Esophagus squamous epithelium (tissue), 5 donors: ENCODE measurements at regions of chr1 and their contacts with region 1.

Region 1: GRCh38 chr1:155504207-155504606 is 58.4 kb downstream of the ASH1L start:
- DNase-seq: no peak
- H3K4me3 ChIP-seq: no peak overlapping the region
- H3K27ac ChIP-seq: no peak overlapping the region
- H3K4me1 ChIP-seq: peaks cover 6 to 51% (median 10%) of the 10 kb centered on the region in 3 donors
- H3K27me3 ChIP-seq: no peaks in the 10 kb centered on the region
- CTCF ChIP-seq: peak in 4 of 6 experiments; percentile 15 to 44 (median 23)
- POLR2A ChIP-seq: no peak

Region 2: DNA sequence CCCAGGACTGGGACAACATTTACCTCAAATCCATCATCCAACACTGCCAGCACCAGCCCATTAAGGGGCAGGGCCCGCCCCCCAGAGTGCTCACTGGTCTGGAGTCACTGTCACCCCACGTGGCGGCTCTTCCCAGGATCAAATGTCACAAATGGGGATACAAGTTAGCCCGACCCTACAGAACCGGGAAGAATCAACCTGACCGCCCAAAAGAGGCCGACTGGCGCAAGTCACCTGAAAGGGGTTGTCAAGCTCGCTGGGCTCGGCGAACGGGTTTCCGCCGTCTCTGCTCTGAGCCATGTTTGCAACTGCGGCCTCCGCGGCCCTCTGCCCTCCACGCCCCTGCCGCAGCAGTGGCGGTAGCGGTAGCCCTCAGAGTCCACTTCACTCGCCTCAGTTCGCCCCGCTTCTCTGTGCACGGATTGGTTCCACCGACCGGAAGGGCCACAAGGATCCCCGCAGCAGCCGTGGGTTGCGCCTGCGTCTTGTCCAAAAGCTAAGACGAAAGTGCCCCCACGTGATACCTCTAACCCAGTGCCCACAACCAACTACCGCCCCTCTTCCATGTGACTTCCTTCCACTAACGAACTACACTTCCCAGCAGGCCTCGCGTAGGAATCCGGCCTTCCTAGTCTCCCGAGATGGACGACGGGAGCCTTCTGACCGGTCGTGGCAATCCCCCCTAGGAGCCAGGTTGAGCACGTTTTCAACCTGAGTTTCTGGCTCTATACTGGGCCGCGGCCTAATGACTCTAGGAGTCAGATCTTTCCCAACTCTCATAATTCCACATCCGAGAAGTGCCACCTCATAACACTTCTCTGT is 242.1 kb before region 1 on chr1 and contains the start of gene SCAMP3:
- intact Hi-C with region 1: loop called (anchors 10 kb)
- DNase-seq: peak; percentile 77
- H3K4me3 ChIP-seq: peak within 1 kb of the TSS; percentile 58 to 88 (median 86)
- H3K27ac ChIP-seq: peak within 1 kb of the TSS; percentile 80 to 90 (median 86)
- H3K4me1 ChIP-seq: peaks cover 15 to 28% (median 15%) of the 10 kb centered on the region in 3 donors
- H3K27me3 ChIP-seq: no peaks in the 10 kb centered on the region
- CTCF ChIP-seq: peak in 1 of 6 experiments; percentile 38
- POLR2A ChIP-seq: peak in 2 of 4 donors; percentile 58 to 65
- total RNA-seq, gene SCAMP3: 56.8 to 72.2 (median 60.1) TPM